MCF 10A (cell line): ENCODE measurements at regions of chr1 and their contacts with region 1.

Region 1: DNA sequence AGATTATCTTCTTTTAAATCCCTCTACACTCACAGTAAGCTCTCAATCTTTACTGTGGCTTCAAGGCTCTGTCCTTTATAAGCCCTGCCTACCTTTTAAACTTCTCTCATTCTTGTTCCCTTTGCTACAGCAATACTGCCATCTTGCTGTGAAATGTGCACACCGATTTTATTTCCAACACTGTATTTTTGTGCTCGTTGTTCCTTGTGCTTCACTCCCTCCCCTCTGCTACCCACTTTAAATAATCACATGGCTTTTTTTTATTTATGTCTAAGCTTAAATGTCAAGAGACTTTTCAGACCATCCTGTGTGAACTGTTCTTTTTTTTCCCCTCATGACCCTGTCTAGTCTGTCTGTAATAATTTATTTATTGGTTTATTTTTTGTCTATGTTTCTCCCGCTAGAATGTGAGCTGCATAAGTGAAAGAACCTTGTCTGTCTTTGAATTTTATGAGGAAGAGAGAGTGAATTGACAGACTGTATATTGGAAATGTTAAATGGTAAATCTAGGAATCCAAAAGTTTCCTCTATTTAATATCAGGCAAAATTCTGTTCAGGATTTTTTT is 45.7 kb downstream of the ABCD3 start:
- DNase-seq: peak; percentile 60
- H3K4me3 Mint-ChIP-seq: no peak overlapping the region
- H3K27ac Mint-ChIP-seq: no peak overlapping the region
- H3K4me1 Mint-ChIP-seq: peaks cover 6% of the 10 kb centered on the region
- H3K27me3 Mint-ChIP-seq: no peaks in the 10 kb centered on the region
- CTCF ChIP-seq: peak; percentile 51

Region 2: GRCh38 chr1:94025383-94026340 is 438.2 kb before region 1 on chr1:
- CTCF ChIA-PET with region 1: interaction called, 62 read pairs
- POLR2A ChIA-PET with region 1: interaction called, 3 read pairs
- intact Hi-C with region 1: loop called (anchors 1 kb)
- DNase-seq: peak; percentile 77
- H3K4me3 Mint-ChIP-seq: no peak overlapping the region
- H3K27ac Mint-ChIP-seq: peak overlapping the region; percentile 77
- H3K4me1 Mint-ChIP-seq: peaks cover 36% of the 10 kb centered on the region
- H3K27me3 Mint-ChIP-seq: no peaks in the 10 kb centered on the region
- CTCF ChIP-seq: peak; percentile 72

Region 3: GRCh38 chr1:94061513-94062443 is 402.1 kb before region 1 on chr1:
- CTCF ChIA-PET with region 1: interaction called, 22 read pairs
- POLR2A ChIA-PET with region 1: no interaction called
- intact Hi-C with region 1: loop called (anchors 1 kb)
- DNase-seq: peak; percentile 76
- H3K4me3 Mint-ChIP-seq: no peak overlapping the region
- H3K27ac Mint-ChIP-seq: no peak overlapping the region
- H3K4me1 Mint-ChIP-seq: peaks cover 5% of the 10 kb centered on the region
- H3K27me3 Mint-ChIP-seq: no peaks in the 10 kb centered on the region
- CTCF ChIP-seq: peak; percentile 87

Region 4: GRCh38 chr1:94358630-94359599 is 104.9 kb before region 1 on chr1:
- CTCF ChIA-PET with region 1: interaction called, 5 read pairs
- POLR2A ChIA-PET with region 1: no interaction called
- intact Hi-C with region 1: loop called (anchors 5 kb)
- DNase-seq: no peak
- H3K4me3 Mint-ChIP-seq: no peak overlapping the region
- H3K27ac Mint-ChIP-seq: no peak overlapping the region
- H3K4me1 Mint-ChIP-seq: no peaks in the 10 kb centered on the region
- H3K27me3 Mint-ChIP-seq: no peaks in the 10 kb centered on the region
- CTCF ChIP-seq: no peak

Region 5: DNA sequence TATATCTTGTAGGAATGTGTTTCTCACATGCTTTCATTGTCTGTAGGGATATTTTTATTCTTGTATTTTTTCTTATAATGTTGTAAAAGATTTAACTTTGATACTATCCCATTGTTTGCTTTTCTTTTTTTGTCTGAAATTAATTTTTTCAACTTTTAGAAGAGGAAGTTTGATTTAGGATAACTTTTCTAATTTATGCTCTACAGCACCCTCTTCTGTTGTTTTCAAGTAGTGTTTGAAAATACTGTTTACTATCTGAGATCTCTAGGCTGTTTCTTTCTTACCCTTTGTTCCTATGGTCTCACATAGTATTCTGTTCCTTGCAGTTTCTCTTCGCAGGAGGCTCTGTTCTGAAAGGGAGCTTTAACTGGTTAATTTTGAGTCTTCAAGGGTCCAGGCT is 23.8 kb before region 1 on chr1:
- CTCF ChIA-PET with region 1: interaction called, 16 read pairs
- POLR2A ChIA-PET with region 1: interaction called, 3 read pairs
- intact Hi-C with region 1: no loop called
- DNase-seq: no peak
- H3K4me3 Mint-ChIP-seq: no peak overlapping the region
- H3K27ac Mint-ChIP-seq: no peak overlapping the region
- H3K4me1 Mint-ChIP-seq: peaks cover 7% of the 10 kb centered on the region
- H3K27me3 Mint-ChIP-seq: no peaks in the 10 kb centered on the region
- CTCF ChIP-seq: no peak

Region 6: DNA sequence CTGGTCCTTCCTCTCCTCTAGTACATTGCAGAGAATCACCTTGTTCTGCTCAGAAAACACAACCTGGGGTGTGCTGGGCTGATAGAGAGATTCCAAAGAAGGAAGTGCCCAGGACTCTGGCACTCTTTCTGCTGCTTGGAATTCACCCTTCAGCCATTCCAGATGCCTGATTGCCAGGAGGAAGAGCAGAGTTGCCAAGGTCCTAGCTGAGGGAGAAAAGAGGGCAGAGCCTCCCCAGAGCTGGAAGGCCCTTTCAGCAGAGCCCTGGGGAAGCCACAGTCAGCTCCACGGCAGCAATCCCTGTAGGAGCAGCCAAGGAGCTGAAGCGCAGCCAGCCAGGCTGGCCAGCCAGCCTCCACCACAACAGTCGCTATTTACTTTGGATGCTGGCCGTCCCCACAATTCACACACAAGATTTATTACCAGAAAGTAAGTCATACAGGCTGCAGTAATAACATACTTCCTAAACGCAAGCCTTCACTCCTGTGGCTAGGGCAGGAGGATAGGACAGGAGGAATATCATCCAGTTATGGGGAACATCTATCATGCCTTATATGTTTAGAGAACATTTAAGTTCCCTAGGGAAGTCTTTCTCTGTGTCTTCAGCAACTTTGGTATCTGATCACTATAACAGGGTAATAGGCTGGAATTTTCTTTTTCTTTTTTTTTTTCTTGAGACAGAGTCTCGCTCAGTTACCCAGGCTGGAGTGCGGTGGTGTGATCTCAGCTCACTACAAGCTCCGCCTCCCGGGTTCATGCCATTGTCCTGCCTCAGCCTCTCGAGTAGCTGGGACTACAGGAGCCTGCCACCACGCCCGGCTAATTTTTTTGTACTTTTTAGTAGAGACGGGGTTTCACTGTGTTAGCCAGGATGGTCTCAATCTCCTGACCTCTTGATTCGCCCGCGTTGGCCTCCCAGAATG is 319.8 kb after region 1 on chr1:
- CTCF ChIA-PET with region 1: no interaction called
- POLR2A ChIA-PET with region 1: no interaction called
- intact Hi-C with region 1: no loop called
- DNase-seq: peak; percentile 87
- H3K4me3 Mint-ChIP-seq: peak overlapping the region; percentile 29
- H3K27ac Mint-ChIP-seq: peak overlapping the region; percentile 95
- H3K4me1 Mint-ChIP-seq: peaks cover 19% of the 10 kb centered on the region
- H3K27me3 Mint-ChIP-seq: no peaks in the 10 kb centered on the region
- CTCF ChIP-seq: no peak

Region 7: DNA sequence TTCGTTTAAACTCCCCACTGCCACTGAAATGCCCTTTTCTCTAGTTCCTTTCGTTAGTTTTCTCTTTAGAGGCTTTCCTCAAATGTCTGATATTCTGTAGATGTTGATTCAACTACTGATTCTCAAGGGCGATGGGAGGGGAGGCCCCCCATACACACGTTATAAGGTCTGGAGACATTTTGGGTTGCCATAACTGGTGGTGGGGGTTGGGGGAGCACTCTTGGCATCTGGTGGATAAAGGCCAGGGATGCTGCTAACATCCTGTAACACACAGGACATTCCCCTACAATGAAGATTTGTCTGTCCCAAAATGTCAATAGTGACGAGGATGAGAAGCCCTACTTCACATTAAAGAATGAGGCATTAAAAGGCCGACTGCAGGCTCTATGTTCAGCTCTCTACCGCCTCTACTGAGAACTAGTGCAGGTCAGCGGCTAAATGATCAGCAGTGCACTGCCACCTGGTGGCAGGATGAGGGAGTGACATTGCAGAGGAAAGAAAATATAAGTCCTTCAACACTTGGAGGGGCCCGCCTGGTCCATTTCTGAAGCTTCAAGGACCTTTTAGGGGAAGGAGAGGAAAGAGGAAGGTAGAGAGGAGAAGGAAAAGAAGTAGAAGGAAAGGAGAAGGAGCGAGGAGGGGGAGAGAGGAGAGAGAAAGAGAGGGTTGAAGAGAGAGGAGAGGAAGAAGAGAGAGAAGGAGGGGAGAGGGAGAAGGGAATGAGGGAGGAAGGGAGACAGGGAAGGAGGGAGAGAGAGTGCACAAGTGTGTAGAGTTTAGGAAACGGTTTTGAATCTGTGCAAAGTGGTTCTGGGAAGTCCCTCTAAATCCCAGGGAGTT is 579.5 kb after region 1 on chr1:
- CTCF ChIA-PET with region 1: no interaction called
- POLR2A ChIA-PET with region 1: no interaction called
- intact Hi-C with region 1: no loop called
- DNase-seq: peak; percentile 82
- H3K4me3 Mint-ChIP-seq: no peak overlapping the region
- H3K27ac Mint-ChIP-seq: no peak overlapping the region
- H3K4me1 Mint-ChIP-seq: peaks cover 10% of the 10 kb centered on the region
- H3K27me3 Mint-ChIP-seq: no peaks in the 10 kb centered on the region
- CTCF ChIP-seq: peak; percentile 98